Ovary (tissue), 10 donors: ENCODE measurements at regions of chr7 and their contacts with region 1.

Region 1: DNA sequence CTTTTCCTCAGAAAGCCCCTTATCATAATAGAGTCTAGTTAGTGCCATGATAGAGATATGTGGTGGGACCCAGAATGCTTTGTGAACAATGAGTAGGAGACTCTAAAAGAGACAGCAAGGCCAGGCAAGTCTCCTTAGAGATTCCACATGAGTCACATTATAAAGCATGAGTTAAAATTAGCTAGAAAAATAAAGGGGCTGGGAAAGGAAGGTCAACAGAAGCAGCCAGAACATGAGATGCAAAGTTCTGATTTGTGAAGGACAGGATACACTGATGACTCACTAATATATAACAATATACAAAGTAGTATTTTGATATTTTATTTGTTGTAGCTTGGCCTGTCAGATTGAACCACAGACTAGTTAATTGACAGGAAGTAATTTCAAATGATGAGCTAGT is 25.3 kb upstream of the SNX13 start:
- DNase-seq: no peak
- H3K4me3 ChIP-seq: no peak overlapping the region
- H3K27ac ChIP-seq: no peak overlapping the region
- H3K4me1 ChIP-seq: no peaks in the 10 kb centered on the region
- H3K27me3 ChIP-seq: no peaks in the 10 kb centered on the region
- CTCF ChIP-seq: no peak
- EP300 ChIP-seq: no peak
- POLR2A ChIP-seq: no peak

Region 2: DNA sequence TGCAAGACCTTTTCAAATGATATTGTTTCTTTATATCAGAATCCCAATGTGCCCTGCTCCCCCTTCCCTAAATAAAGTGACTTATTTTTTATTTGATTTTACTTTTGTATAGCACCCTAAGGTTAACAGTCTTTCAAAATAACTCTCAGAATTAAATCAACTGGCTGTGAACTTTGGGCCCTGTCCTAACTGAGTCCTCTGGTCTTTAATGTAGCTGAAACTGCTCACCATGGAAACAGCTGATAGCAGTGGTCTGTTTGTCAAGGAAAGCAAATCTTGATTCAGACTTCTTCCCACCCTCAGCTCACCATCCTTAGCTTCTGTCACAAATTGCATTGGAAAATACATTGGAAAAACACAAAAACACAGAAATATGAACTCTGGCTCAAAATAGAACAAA is 167.2 kb after region 1 on chr7:
- intact Hi-C with region 1: loop called in 1 of 4 experiments (anchors 5 kb)
- DNase-seq: no peak
- H3K4me3 ChIP-seq: no peak overlapping the region
- H3K27ac ChIP-seq: no peak overlapping the region
- H3K4me1 ChIP-seq: no peaks in the 10 kb centered on the region
- H3K27me3 ChIP-seq: no peaks in the 10 kb centered on the region
- CTCF ChIP-seq: no peak
- EP300 ChIP-seq: no peak
- POLR2A ChIP-seq: no peak